ENCODE measurements at regions of chr7 and their contacts with region 1.

Region 1: GRCh38 chr7:112444505-112444904 is 5.8 kb upstream of the IFRD1 start:
- DNase-seq: no peak
- ATAC-seq: no peak
- H3K4me3 ChIP-seq: no peak overlapping the region
- H3K27ac ChIP-seq: no peak overlapping the region
- H3K4me1 ChIP-seq: peaks cover 25% of the 10 kb centered on the region
- H3K27me3 ChIP-seq: no peaks in the 10 kb centered on the region
- CTCF ChIP-seq: no peak
- EP300 ChIP-seq: no peak
- POLR2A ChIP-seq: no peak
- RAD21 ChIP-seq: no peak

Region 2: DNA sequence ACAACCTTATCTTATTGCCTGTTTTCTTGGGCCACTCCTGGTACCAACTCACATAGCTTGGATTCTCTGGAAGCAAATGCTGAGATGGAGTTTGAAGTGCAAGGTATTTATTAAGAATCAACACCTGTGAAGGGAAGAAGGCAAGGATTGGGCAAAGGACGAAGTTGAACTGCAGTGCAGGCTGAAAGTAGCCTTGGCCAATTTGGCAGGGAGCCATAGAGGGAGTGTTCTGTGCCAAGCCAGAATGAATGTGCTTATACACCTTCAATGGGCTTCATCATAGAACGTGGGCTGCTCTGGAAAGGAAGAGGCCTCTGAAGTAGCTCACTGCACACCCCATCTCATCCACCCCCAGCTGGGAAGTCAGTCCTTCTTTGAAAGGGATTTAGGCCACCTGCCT is 74.1 kb before region 1 on chr7:
- CTCF ChIA-PET with region 1: no interaction called
- POLR2A ChIA-PET with region 1: no interaction called
- in situ Hi-C with region 1: no loop called
- intact Hi-C with region 1: no loop called
- DNase-seq: no peak
- ATAC-seq: no peak
- H3K4me3 ChIP-seq: no peak overlapping the region
- H3K27ac ChIP-seq: no peak overlapping the region
- H3K4me1 ChIP-seq: no peaks in the 10 kb centered on the region
- H3K27me3 ChIP-seq: no peaks in the 10 kb centered on the region
- CTCF ChIP-seq: no peak
- EP300 ChIP-seq: no peak
- POLR2A ChIP-seq: no peak
- RAD21 ChIP-seq: no peak

Region 3: DNA sequence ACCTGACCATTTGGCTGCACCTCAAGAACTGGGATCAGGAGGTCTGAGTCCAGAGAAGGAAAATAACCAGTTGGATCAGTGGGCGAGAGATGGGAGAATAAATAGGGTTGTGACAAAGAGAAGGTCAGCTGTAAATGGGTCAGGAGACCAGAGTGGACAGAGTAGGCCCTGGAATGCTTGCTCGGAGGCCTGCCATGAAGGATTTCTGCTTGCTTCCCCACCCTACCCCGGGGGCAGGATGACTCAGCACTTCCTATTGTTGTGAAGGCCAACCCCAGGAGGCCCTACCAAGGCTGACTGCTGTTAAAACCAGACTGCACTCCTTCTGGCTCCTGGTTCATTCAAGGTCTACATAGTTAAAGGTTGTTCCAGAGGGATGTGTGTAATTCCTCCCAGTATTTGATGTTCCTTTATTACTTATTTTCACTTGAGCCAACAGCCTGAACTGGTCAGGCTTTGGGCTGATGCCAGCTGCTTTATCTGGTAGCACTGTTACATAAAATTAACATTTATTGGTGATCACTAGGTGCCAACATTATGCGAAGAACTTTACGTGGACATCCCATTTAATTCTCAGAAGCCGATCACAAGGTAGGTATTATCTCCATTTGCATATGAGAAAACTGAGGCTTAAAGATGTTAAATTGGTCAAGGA is 21.5 kb before region 1 on chr7:
- CTCF ChIA-PET with region 1: no interaction called
- POLR2A ChIA-PET with region 1: interaction called, 64 read pairs
- in situ Hi-C with region 1: no loop called
- intact Hi-C with region 1: loop called (anchors 2 kb)
- DNase-seq: peak; percentile 89
- ATAC-seq: peak; percentile 95
- H3K4me3 ChIP-seq: peak overlapping the region in 1 of 3 experiments; percentile 24; a peak in 2 of 6 replicates
- H3K27ac ChIP-seq: peak overlapping the region; percentile 63
- H3K4me1 ChIP-seq: peaks cover 65% of the 10 kb centered on the region
- H3K27me3 ChIP-seq: no peaks in the 10 kb centered on the region
- CTCF ChIP-seq: no peak
- EP300 ChIP-seq: peak in 1 of 2 experiments; percentile 71; a peak in 3 of 4 replicates
- POLR2A ChIP-seq: 0 out of 4 replicates have a peak, but pooled peaks of 1 of the 2 experiments have one; percentile 34
- RAD21 ChIP-seq: no peak

Region 4: GRCh38 chr7:112665726-112666125 is 221.2 kb after region 1 on chr7:
- CTCF ChIA-PET with region 1: no interaction called
- POLR2A ChIA-PET with region 1: no interaction called
- in situ Hi-C with region 1: no loop called
- intact Hi-C with region 1: no loop called
- DNase-seq: no peak
- ATAC-seq: peak; percentile 53; the same call in 2 of the 3 replicates
- H3K4me3 ChIP-seq: no peak overlapping the region
- H3K27ac ChIP-seq: no peak overlapping the region
- H3K4me1 ChIP-seq: no peaks in the 10 kb centered on the region
- H3K27me3 ChIP-seq: no peaks in the 10 kb centered on the region
- CTCF ChIP-seq: no peak
- EP300 ChIP-seq: no peak
- POLR2A ChIP-seq: no peak
- RAD21 ChIP-seq: no peak

Region 5: GRCh38 chr7:112843151-112843550 is 398.6 kb after region 1 on chr7:
- CTCF ChIA-PET with region 1: no interaction called
- POLR2A ChIA-PET with region 1: no interaction called
- in situ Hi-C with region 1: no loop called
- intact Hi-C with region 1: no loop called
- DNase-seq: no peak
- ATAC-seq: no peak
- H3K4me3 ChIP-seq: no peak overlapping the region
- H3K27ac ChIP-seq: no peak overlapping the region
- H3K4me1 ChIP-seq: no peaks in the 10 kb centered on the region
- H3K27me3 ChIP-seq: no peaks in the 10 kb centered on the region
- CTCF ChIP-seq: no peak
- EP300 ChIP-seq: no peak
- POLR2A ChIP-seq: no peak
- RAD21 ChIP-seq: no peak

Measured in HepG2 (cell line).